ENCODE measurements at regions of chr5 and their contacts with region 1.

Region 1: DNA sequence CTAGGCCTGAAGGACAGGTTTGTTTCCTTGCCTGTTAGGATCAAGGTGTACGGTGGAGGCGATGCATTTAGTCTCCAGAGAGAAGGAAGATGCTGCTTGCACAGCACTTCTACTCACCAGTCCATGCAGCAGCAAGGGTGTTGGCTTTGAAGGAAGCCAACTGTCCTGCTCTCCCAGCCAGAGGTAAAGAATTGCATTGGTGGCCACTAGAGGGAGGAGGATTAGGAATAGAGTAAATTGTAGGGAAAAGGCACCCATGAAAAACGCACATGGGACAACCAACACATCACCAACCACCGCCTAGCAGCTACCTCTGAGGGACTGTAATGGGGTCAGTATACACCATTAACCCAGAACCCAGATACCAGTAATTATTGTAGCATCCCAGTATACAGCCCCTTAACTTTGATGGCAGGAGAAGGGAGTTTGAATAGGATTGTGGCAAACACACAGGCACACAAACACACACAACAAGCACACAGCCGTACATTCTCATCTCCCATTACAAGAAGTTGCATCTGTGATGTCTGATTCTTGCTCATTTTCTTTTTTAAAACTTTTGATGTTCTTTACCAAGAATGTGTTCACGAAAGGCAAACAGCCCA is 267.7 kb downstream of the ADAMTS6 start:
- DNase-seq: peak; percentile 45
- ATAC-seq: peak; percentile 29; the same call in 1 of the 2 replicates
- H3K4me3 ChIP-seq: no peak overlapping the region
- H3K27ac ChIP-seq: no peak overlapping the region
- H3K4me1 ChIP-seq: peaks cover 25% of the 10 kb centered on the region
- H3K27me3 ChIP-seq: no peaks in the 10 kb centered on the region
- CTCF ChIP-seq: peak; percentile 58

Region 2: GRCh38 chr5:65157906-65158603 is 56.0 kb before region 1 on chr5:
- CTCF ChIA-PET with region 1: no interaction called
- POLR2A ChIA-PET with region 1: no interaction called
- intact Hi-C with region 1: loop called (anchors 5 kb)
- DNase-seq: peak; percentile 78
- ATAC-seq: peak; percentile 97
- H3K4me3 ChIP-seq: no peak overlapping the region
- H3K27ac ChIP-seq: peak overlapping the region; percentile 73
- H3K4me1 ChIP-seq: peaks cover 41% of the 10 kb centered on the region
- H3K27me3 ChIP-seq: no peaks in the 10 kb centered on the region
- CTCF ChIP-seq: no peak

Region 3: DNA sequence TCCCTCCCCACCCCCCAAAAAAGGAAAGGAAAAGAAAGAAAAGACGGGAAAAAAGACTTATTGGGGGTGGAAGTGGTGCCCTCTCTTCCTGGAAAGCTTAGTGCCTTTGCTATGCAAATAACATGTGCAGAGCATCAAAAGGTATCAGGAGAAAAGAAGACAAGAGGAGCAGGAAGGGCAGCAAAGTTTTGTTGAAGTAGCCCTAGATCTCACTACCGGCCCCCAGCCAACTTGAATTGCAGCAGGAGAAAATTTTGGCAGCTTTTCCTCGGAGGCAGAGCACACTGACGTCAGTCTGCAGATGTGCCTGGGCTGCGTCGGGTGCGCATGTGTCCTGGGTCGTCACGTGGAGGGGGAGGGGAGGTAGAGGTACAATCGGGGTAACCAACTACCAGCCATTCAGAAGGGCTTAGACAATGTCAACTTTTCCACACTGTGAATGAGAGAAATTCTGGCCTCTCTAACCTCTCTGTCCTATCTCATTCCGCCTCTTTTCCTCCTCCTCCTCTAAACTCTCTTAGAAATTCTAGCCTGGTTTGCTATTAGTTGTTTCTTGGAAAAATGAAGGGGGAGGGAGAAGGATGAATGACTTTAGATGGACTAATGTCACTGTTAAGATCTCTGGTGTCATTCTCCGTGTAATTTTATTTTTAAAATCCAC is 267.7 kb after region 1 on chr5 and contains the start of gene ADAMTS6:
- CTCF ChIA-PET with region 1: no interaction called
- POLR2A ChIA-PET with region 1: interaction called, 13 read pairs
- intact Hi-C with region 1: loop called (anchors 5 kb)
- DNase-seq: peak; percentile 59
- ATAC-seq: peak; percentile 65
- H3K4me3 ChIP-seq: peak within 1 kb of the TSS; percentile 79
- H3K27ac ChIP-seq: peak within 1 kb of the TSS; percentile 48
- H3K4me1 ChIP-seq: peaks cover 7% of the 10 kb centered on the region; the same call in 1 of the 2 replicates
- H3K27me3 ChIP-seq: no peaks in the 10 kb centered on the region
- CTCF ChIP-seq: no peak
- total RNA-seq, gene ADAMTS6: 1.5 and 1.7 TPM in 2 replicates

Measured in PC-3 (cell line).